Endothelial cell of umbilical vein (primary cell): ENCODE measurements at regions of chr18 and their contacts with region 1.

Region 1: GRCh38 chr18:22385718-22386117 is 32.0 kb downstream of the CTAGE1 start:
- DNase-seq: peak; percentile 93
- H3K4me3 ChIP-seq: peak overlapping the region in 1 of 3 experiments; percentile 18
- H3K27ac ChIP-seq: peak overlapping the region; percentile 84
- H3K4me1 ChIP-seq: peaks cover 14% of the 10 kb centered on the region
- H3K27me3 ChIP-seq: no peaks in the 10 kb centered on the region
- CTCF ChIP-seq: no peak
- POLR2A ChIP-seq: no peak

Region 2: GRCh38 chr18:22348521-22349316 is 37.0 kb before region 1 on chr18:
- CTCF ChIA-PET with region 1: no interaction called
- POLR2A ChIA-PET with region 1: no interaction called
- dilution Hi-C with region 1: no loop called
- intact Hi-C with region 1: loop called (anchors 1 kb)
- DNase-seq: peak; percentile 56
- H3K4me3 ChIP-seq: peak overlapping the region in 2 of 3 experiments; percentile 33 to 35
- H3K27ac ChIP-seq: peak overlapping the region; percentile 67
- H3K4me1 ChIP-seq: peaks cover 56% of the 10 kb centered on the region
- H3K27me3 ChIP-seq: no peaks in the 10 kb centered on the region
- CTCF ChIP-seq: no peak
- POLR2A ChIP-seq: no peak

Region 3: GRCh38 chr18:22399949-22400348 is 14.2 kb after region 1 on chr18:
- CTCF ChIA-PET with region 1: interaction called, 3 read pairs
- POLR2A ChIA-PET with region 1: no interaction called
- dilution Hi-C with region 1: no loop called
- intact Hi-C with region 1: loop called (anchors 1 kb)
- DNase-seq: peak; percentile 69
- H3K4me3 ChIP-seq: no peak overlapping the region
- H3K27ac ChIP-seq: peak overlapping the region; percentile 84
- H3K4me1 ChIP-seq: peaks cover 24% of the 10 kb centered on the region
- H3K27me3 ChIP-seq: no peaks in the 10 kb centered on the region
- CTCF ChIP-seq: no peak
- POLR2A ChIP-seq: no peak

Region 4: GRCh38 chr18:22432672-22433137 is 47.0 kb after region 1 on chr18:
- CTCF ChIA-PET with region 1: no interaction called
- POLR2A ChIA-PET with region 1: no interaction called
- dilution Hi-C with region 1: no loop called
- intact Hi-C with region 1: loop called (anchors 1 kb)
- DNase-seq: peak; percentile 93
- H3K4me3 ChIP-seq: no peak overlapping the region
- H3K27ac ChIP-seq: peak overlapping the region; percentile 67
- H3K4me1 ChIP-seq: peaks cover 25% of the 10 kb centered on the region
- H3K27me3 ChIP-seq: no peaks in the 10 kb centered on the region
- CTCF ChIP-seq: no peak
- POLR2A ChIP-seq: peak; percentile 46

Region 5: GRCh38 chr18:22451796-22452195 is 66.1 kb after region 1 on chr18:
- CTCF ChIA-PET with region 1: no interaction called
- POLR2A ChIA-PET with region 1: interaction called, 3 read pairs
- dilution Hi-C with region 1: no loop called
- intact Hi-C with region 1: loop called (anchors 5 kb)
- DNase-seq: peak; percentile 29
- H3K4me3 ChIP-seq: no peak overlapping the region
- H3K27ac ChIP-seq: peak overlapping the region; percentile 74
- H3K4me1 ChIP-seq: peaks cover 9% of the 10 kb centered on the region
- H3K27me3 ChIP-seq: no peaks in the 10 kb centered on the region
- CTCF ChIP-seq: no peak
- POLR2A ChIP-seq: no peak